Endothelial cell of umbilical vein (primary cell): ENCODE measurements at regions of chr4 and their contacts with region 1.

Region 1: GRCh38 chr4:90419124-90419711 is 292.0 kb downstream of the CCSER1 start:
- DNase-seq: peak; percentile 80
- H3K4me3 ChIP-seq: no peak overlapping the region
- H3K27ac ChIP-seq: no peak overlapping the region
- H3K4me1 ChIP-seq: no peaks in the 10 kb centered on the region
- H3K27me3 ChIP-seq: no peaks in the 10 kb centered on the region
- CTCF ChIP-seq: peak; percentile 37 to 41
- POLR2A ChIP-seq: no peak

Region 2: GRCh38 chr4:90357117-90357710 is 62.0 kb before region 1 on chr4:
- CTCF ChIA-PET with region 1: interaction called, 15 read pairs
- POLR2A ChIA-PET with region 1: no interaction called
- dilution Hi-C with region 1: no loop called
- intact Hi-C with region 1: no loop called
- DNase-seq: peak; percentile 71
- H3K4me3 ChIP-seq: no peak overlapping the region
- H3K27ac ChIP-seq: no peak overlapping the region
- H3K4me1 ChIP-seq: no peaks in the 10 kb centered on the region
- H3K27me3 ChIP-seq: no peaks in the 10 kb centered on the region
- CTCF ChIP-seq: peak; percentile 44 to 52
- POLR2A ChIP-seq: no peak

Region 3: DNA sequence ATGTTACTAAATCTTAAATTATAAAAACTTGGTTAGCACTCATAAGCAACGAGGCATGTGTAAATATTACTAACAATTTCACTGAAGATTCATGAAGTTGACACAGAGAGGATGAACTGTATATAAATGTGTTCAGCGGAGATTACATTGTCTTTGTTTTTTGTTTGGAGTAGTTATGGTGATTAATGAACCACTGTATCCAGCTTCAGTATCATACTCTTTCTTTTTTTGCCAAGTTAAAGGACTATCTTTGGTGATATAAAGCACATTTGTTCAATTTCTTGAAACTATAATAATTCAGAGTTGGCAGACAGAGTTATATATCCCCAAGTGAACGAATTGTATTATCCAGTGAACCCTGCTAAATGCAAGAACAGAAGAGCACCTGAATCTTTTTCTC is 205.6 kb after region 1 on chr4:
- CTCF ChIA-PET with region 1: interaction called, 7 read pairs
- POLR2A ChIA-PET with region 1: no interaction called
- dilution Hi-C with region 1: no loop called
- intact Hi-C with region 1: loop called (anchors 5 kb)
- DNase-seq: peak; percentile 68
- H3K4me3 ChIP-seq: no peak overlapping the region
- H3K27ac ChIP-seq: no peak overlapping the region
- H3K4me1 ChIP-seq: peaks cover 20% of the 10 kb centered on the region
- H3K27me3 ChIP-seq: no peaks in the 10 kb centered on the region
- CTCF ChIP-seq: no peak
- POLR2A ChIP-seq: no peak

Region 4: GRCh38 chr4:90780193-90780592 is 361.0 kb after region 1 on chr4:
- CTCF ChIA-PET with region 1: no interaction called
- POLR2A ChIA-PET with region 1: no interaction called
- dilution Hi-C with region 1: no loop called
- intact Hi-C with region 1: no loop called
- DNase-seq: no peak
- H3K4me3 ChIP-seq: no peak overlapping the region
- H3K27ac ChIP-seq: no peak overlapping the region
- H3K4me1 ChIP-seq: no peaks in the 10 kb centered on the region
- H3K27me3 ChIP-seq: no peaks in the 10 kb centered on the region
- CTCF ChIP-seq: no peak
- POLR2A ChIP-seq: no peak

Region 5: DNA sequence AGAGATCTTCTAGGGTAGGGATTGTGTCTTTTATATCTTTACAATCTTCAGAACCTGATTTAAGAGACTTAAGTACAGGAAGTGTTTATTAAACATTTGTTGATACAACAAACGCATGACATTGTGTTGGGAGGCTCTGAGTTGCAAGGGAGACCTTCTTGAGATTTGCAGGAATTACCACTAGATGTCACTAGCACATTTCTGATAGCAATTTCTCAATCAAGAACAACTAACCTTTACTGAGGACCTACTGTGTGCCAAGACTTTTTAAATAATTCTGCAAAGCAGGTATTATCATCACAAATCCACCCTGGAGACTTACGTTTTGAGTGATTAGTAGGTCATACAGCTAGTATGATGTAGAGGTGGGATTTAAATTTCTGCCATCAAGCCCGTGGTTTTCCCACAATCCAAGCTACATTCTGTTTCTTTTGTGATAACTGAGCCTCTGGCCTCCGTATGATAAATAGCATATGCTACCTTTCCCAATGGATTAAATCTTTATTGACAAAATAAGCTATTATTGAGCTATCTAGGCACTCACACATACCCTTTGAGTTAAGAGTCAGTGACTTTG is 694.0 kb after region 1 on chr4:
- CTCF ChIA-PET with region 1: interaction called, 77 read pairs
- POLR2A ChIA-PET with region 1: no interaction called
- dilution Hi-C with region 1: no loop called
- intact Hi-C with region 1: loop called (anchors 1 kb)
- DNase-seq: peak; percentile 53
- H3K4me3 ChIP-seq: no peak overlapping the region
- H3K27ac ChIP-seq: no peak overlapping the region
- H3K4me1 ChIP-seq: no peaks in the 10 kb centered on the region
- H3K27me3 ChIP-seq: no peaks in the 10 kb centered on the region
- CTCF ChIP-seq: peak; percentile 31 to 48
- POLR2A ChIP-seq: no peak

Region 6: GRCh38 chr4:92163348-92163747 is 1744.1 kb after region 1 on chr4:
- CTCF ChIA-PET with region 1: interaction called, 7 read pairs
- POLR2A ChIA-PET with region 1: no interaction called
- dilution Hi-C with region 1: no loop called
- intact Hi-C with region 1: loop called (anchors 2 kb)
- DNase-seq: peak; percentile 27
- H3K4me3 ChIP-seq: no peak overlapping the region
- H3K27ac ChIP-seq: no peak overlapping the region
- H3K4me1 ChIP-seq: no peaks in the 10 kb centered on the region
- H3K27me3 ChIP-seq: no peaks in the 10 kb centered on the region
- CTCF ChIP-seq: peak; percentile 31 to 41
- POLR2A ChIP-seq: no peak